ENCODE measurements at regions of chr6 and their contacts with region 1.

Region 1: DNA sequence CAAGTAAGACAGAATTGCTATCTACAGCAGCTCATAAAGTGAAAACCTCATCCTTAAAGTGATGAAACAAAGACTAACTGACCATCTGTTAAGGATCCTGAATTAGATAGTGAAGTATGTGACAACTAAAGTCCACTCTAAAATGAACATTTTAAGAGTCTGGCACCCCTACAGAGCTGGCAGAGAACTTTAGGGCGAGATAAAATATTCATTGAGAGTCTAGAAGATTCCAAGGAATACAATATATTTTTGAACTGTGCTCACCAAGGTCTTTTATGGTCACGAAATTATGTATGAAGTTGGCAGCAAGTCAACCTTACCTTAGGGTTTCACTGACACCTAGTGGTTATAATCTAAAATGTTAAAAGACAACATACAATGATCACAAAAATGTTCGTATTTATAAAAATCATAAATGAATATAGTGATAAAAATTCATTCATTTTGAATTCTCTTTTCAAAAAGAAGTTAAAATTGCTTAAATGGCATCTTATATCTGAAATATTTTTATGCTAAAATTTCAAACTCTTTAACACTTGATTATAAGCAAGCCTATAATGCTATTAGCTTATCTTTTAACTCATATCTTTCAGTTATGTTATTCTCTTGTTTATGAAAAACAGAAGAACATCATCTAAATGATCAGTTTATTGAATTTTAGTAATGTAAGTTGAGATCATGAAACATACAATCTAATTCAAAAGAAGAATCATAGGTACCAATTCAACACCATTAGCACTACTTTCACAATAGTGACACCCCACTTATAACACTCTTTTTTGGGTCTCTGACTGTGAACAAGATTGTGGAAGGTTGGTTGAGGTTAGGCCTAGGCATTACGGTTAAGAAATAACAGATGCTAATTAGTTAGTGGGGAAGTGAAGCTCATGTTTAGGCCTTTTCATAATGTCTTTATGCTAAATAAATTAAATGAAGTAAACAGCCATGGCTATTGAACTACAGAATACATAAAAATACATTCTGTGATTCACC is 27.5 kb downstream of the RSPH3 start:
- DNase-seq: no peak
- H3K4me3 Mint-ChIP-seq: no peak overlapping the region
- H3K27ac Mint-ChIP-seq: no peak overlapping the region
- H3K4me1 Mint-ChIP-seq: peaks cover 5% of the 10 kb centered on the region
- H3K27me3 Mint-ChIP-seq: no peaks in the 10 kb centered on the region

Region 2: GRCh38 chr6:158704181-158704822 is 268.2 kb before region 1 on chr6:
- intact Hi-C with region 1: loop called (anchors 1 kb)
- DNase-seq: peak; percentile 71
- H3K4me3 Mint-ChIP-seq: no peak overlapping the region
- H3K27ac Mint-ChIP-seq: peak overlapping the region; percentile 78
- H3K4me1 Mint-ChIP-seq: peaks cover 23% of the 10 kb centered on the region
- H3K27me3 Mint-ChIP-seq: no peaks in the 10 kb centered on the region

Region 3: GRCh38 chr6:158769771-158770432 is 202.6 kb before region 1 on chr6:
- intact Hi-C with region 1: loop called (anchors 5 kb)
- DNase-seq: no peak
- H3K4me3 Mint-ChIP-seq: no peak overlapping the region
- H3K27ac Mint-ChIP-seq: peak overlapping the region; percentile 74
- H3K4me1 Mint-ChIP-seq: peaks cover 21% of the 10 kb centered on the region
- H3K27me3 Mint-ChIP-seq: no peaks in the 10 kb centered on the region

Region 4: DNA sequence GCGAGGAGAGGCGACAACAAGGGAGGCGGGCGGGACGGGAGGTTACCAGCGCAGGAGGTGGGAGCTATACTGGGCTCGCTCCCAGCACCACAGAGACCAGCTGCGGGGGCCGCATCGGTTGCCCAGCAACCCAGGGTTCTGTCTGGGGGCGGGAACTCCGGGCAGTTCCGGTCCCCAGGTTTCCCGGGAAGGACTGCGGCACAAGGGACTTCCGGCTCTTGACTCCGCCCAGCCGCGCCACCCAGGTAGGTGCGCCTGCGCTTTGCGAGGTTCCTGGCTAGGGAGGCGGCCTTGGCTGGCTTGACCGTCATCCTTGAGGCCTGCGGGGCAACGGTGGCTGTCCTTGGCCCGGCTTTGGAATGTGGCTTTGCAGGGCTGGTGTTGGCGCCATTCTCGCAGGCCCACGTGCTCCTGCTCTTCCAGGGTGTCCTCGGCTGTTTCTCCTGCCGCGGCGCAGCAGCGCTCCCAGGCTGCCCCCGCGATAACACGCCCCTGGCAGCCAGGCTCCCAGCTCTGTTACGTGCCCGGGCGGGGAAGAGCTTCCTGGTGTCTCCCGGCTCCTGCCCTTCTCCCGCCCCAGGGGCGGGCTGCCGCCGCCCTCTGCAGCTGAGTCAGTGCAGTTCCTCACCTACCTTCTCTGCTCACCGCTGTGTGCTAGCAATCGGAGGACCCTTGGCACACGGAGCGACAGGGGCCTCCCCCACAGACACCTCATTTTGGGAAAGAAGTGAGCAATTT is 27.3 kb after region 1 on chr6 and contains the start of gene RSPH3:
- intact Hi-C with region 1: no loop called
- DNase-seq: peak; percentile 87
- H3K4me3 Mint-ChIP-seq: peak within 1 kb of the TSS; percentile 96
- H3K27ac Mint-ChIP-seq: peak within 1 kb of the TSS; percentile 89
- H3K4me1 Mint-ChIP-seq: peaks cover 49% of the 10 kb centered on the region
- H3K27me3 Mint-ChIP-seq: no peaks in the 10 kb centered on the region
- total RNA-seq, gene RSPH3: 4.9 and 5.1 TPM in 2 replicates

Region 5: DNA sequence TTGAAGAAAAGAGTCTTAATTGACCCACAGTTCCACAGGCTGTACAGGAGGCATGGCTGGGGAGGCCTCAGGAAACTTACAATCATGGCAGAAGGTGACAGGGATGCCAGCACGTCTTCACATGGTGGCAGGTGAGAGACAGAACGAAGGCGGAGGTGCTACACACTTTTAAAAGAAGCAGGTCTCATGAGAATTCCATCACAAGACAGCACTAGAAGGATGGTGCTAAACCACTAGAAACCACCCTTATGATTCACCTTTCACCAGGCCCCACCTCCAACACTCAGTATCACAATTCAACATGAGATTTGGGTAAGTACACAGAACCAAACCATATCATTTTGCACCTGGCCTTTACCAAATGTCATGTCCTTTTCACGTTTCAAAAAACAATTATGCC is 51.4 kb after region 1 on chr6:
- intact Hi-C with region 1: no loop called
- DNase-seq: no peak
- H3K4me3 Mint-ChIP-seq: no peak overlapping the region
- H3K27ac Mint-ChIP-seq: peak overlapping the region; percentile 71
- H3K4me1 Mint-ChIP-seq: peaks cover 21% of the 10 kb centered on the region
- H3K27me3 Mint-ChIP-seq: no peaks in the 10 kb centered on the region